ENCODE measurements at regions of chr3 and their contacts with region 1.

Region 1: GRCh38 chr3:157532529-157533297 is 29.5 kb upstream of the VEPH1 start:
- DNase-seq: peak; percentile 9
- ATAC-seq: peak; percentile 95
- H3K4me3 ChIP-seq: no peak overlapping the region
- H3K27ac ChIP-seq: no peak overlapping the region
- H3K4me1 ChIP-seq: no peaks in the 10 kb centered on the region
- H3K27me3 ChIP-seq: no peaks in the 10 kb centered on the region
- CTCF ChIP-seq: peak; percentile 66 to 75 (median 70)
- EP300 ChIP-seq: no peak
- POLR2A ChIP-seq: no peak
- RAD21 ChIP-seq: peak; percentile 85

Region 2: DNA sequence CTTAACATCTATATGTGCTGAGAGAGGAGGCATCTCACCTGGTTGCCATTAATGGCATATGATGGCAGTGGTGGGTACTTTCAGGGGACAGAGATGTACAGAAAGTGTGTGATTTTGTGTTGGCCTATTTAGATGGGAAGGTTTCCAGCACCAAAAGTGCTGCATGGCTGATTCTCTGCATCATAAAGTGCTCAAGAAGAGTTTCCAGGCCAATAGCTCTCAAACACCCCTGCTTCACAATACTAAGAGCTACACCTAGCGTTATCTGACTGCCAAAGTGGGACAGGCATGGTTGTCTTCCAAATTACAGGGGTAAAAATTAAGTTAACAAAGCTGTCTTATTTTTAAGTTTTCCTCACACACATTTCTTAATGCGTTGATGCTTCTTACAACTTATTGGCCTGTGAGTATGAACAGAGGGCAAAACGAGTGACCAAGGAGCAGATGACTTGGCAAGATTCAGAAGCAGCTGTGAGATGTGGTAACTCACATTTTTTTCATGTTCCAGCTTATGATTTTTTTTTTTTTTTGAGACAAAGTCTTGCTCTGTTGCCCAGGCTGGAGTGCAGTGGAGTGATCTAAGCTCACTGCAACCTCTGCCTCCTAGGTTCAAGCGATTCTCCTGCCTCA is 11.9 kb after region 1 on chr3:
- CTCF ChIA-PET with region 1: interaction called, 10 read pairs
- POLR2A ChIA-PET with region 1: no interaction called
- RAD21 ChIA-PET with region 1: no interaction called
- SMC1A ChIA-PET with region 1: interaction called, 4 read pairs
- in situ Hi-C with region 1: no loop called
- intact Hi-C with region 1: no loop called
- DNase-seq: no peak
- ATAC-seq: no peak
- H3K4me3 ChIP-seq: no peak overlapping the region
- H3K27ac ChIP-seq: no peak overlapping the region
- H3K4me1 ChIP-seq: no peaks in the 10 kb centered on the region
- H3K27me3 ChIP-seq: no peaks in the 10 kb centered on the region
- CTCF ChIP-seq: no peak
- EP300 ChIP-seq: no peak
- POLR2A ChIP-seq: no peak
- RAD21 ChIP-seq: no peak

Region 3: GRCh38 chr3:157559401-157559800 is 26.7 kb after region 1 on chr3:
- CTCF ChIA-PET with region 1: interaction called, 11 read pairs
- POLR2A ChIA-PET with region 1: no interaction called
- RAD21 ChIA-PET with region 1: interaction called, 3 read pairs
- SMC1A ChIA-PET with region 1: interaction called, 3 read pairs
- in situ Hi-C with region 1: no loop called
- intact Hi-C with region 1: no loop called
- DNase-seq: no peak
- ATAC-seq: no peak
- H3K4me3 ChIP-seq: no peak overlapping the region
- H3K27ac ChIP-seq: no peak overlapping the region
- H3K4me1 ChIP-seq: no peaks in the 10 kb centered on the region
- H3K27me3 ChIP-seq: no peaks in the 10 kb centered on the region; a peak in 1 of 4 replicates
- CTCF ChIP-seq: no peak
- EP300 ChIP-seq: no peak
- POLR2A ChIP-seq: no peak
- RAD21 ChIP-seq: no peak

Region 4: GRCh38 chr3:157759311-157759710 is 226.6 kb after region 1 on chr3:
- CTCF ChIA-PET with region 1: no interaction called
- POLR2A ChIA-PET with region 1: no interaction called
- RAD21 ChIA-PET with region 1: no interaction called
- SMC1A ChIA-PET with region 1: no interaction called
- in situ Hi-C with region 1: no loop called
- intact Hi-C with region 1: no loop called
- DNase-seq: no peak
- ATAC-seq: no peak
- H3K4me3 ChIP-seq: no peak overlapping the region
- H3K27ac ChIP-seq: no peak overlapping the region
- H3K4me1 ChIP-seq: no peaks in the 10 kb centered on the region
- H3K27me3 ChIP-seq: no peaks in the 10 kb centered on the region
- CTCF ChIP-seq: no peak
- EP300 ChIP-seq: no peak
- POLR2A ChIP-seq: no peak
- RAD21 ChIP-seq: no peak